AG04449 (cell line): ENCODE measurements at regions of chr2 and their contacts with region 1.

Region 1: DNA sequence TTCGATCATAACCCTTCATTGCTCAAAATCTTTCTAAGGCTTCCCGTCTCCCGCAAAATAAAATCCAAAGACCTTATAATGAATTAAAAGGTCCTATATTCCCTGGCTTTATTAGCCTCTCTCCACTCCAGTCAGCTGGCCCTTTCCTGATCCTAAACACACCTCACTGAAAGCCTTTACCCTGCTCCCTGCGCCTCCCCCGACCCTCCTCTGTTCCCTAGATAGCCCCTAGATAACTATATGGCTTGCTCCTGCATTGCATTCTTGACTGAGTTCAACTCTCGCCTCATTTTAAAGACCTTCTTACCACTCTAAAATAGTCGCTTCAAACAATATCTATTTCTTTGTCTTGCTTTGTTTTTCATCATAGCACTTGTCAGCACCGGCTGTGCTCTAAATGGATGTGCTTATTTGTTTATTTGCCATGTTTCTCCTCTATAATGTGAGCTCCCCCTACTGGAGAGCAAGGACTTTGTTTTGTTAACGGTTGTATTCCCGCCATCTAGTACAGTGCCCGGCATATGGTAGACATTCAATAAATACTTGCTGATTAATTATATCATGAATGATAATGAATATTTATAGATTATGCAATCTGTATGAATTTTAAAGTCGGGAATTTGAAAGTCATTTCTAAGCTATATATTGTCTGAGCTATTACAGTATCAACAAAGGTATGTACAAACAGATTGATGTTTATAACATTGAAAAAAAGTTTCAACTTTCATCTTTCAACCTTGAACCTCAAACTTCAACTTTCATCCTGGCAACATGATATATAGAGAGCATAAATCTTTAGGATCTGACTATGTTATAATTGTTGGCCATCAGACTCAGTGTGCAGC is 32.4 kb upstream of the VIT start:
- DNase-seq: no peak
- H3K4me3 ChIP-seq: no peak overlapping the region
- CTCF ChIP-seq: peak; percentile 55

Region 2: GRCh38 chr2:36355151-36355889 is 308.8 kb before region 1 on chr2 and contains the start of gene CRIM1:
- CTCF ChIA-PET with region 1: interaction called, 18 read pairs
- POLR2A ChIA-PET with region 1: interaction called, 3 read pairs
- DNase-seq: no peak
- H3K4me3 ChIP-seq: peak within 1 kb of the TSS; percentile 72
- CTCF ChIP-seq: no peak

Region 3: DNA sequence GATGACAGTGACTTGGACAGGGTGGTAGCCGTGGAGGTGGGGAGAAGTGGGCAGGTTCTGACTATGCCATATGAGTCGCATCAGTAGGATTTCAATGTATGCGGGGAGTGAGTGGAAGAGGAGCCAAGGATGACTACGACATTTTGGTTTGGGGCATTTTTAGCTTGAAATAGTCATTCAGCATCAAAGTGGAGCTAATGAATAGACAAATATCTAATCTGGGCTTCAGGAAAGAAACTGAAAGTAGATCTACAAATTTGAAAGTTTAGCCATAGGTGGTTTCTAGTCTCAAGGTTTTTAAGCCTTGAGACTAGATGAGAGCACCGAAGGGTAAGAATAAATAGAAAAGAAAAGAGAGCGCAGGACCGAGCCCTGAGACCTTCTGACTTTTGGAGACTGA is 124.4 kb before region 1 on chr2:
- CTCF ChIA-PET with region 1: interaction called, 43 read pairs
- POLR2A ChIA-PET with region 1: no interaction called
- DNase-seq: peak; percentile 24
- H3K4me3 ChIP-seq: no peak overlapping the region
- CTCF ChIP-seq: no peak

Region 4: GRCh38 chr2:36553683-36554082 is 110.4 kb before region 1 on chr2:
- CTCF ChIA-PET with region 1: interaction called, 18 read pairs
- POLR2A ChIA-PET with region 1: interaction called, 3 read pairs
- DNase-seq: no peak
- H3K4me3 ChIP-seq: no peak overlapping the region
- CTCF ChIP-seq: no peak

Region 5: DNA sequence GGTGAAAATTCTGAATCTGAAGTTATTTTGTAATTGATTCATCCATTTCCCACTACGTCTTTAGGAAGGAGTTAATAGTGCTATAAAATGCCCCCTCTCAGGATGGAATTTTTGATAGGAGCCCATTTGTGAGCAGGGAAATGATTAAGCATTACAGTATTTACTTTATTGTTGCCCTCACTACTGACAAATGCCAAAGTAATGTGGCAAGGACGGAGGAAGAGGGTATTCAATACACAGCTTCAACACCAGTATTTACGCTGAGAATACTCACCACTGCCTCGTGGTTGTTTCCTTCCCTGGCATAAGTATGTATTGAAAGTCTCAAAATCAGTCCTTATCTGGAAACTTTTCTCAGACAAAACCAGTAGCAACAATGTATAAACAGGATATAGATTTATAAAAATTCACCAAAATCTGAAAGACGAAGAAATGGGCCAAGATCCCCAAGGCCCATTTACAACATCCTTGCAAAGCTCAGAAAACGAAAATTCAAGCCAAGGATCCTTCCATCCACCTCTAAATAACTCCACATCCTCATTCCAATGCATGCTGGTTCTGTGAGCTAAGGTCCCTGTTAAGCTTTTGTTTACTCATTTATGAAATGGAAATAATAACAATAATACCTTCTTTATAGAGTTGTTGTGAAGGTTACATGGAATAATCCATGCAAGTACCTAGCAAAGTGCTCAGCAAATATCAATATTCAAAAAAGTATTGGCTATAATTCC is 95.4 kb before region 1 on chr2:
- CTCF ChIA-PET with region 1: interaction called, 22 read pairs
- POLR2A ChIA-PET with region 1: no interaction called
- DNase-seq: no peak
- H3K4me3 ChIP-seq: no peak overlapping the region
- CTCF ChIP-seq: no peak

Region 6: GRCh38 chr2:36677386-36677785 is 13.3 kb after region 1 on chr2:
- CTCF ChIA-PET with region 1: interaction called, 60 read pairs
- POLR2A ChIA-PET with region 1: no interaction called
- DNase-seq: no peak
- H3K4me3 ChIP-seq: no peak overlapping the region
- CTCF ChIP-seq: no peak